SK-N-SH (cell line): ENCODE measurements at regions of chr4 and their contacts with region 1.

Region 1: DNA sequence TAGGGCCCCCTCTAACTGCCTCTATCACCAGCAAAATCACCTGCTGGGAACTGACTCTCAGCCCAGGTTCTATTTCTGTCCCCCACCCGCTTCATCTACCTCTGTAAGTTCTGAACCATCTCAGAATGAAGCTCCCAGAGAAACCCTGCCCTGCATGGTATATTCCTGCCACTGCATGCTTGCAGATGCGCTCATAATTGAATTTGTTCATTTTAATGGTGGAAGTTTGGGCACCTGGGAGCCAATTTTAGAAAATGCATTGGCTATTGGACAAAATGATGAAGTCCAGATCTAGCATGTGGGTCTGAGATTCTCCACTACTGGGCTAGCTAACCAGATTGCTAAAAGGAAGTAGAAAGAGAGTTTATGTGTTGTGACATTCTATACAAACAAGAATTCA is 28.6 kb upstream of the SLC10A4 start:
- DNase-seq: no peak
- H3K4me3 ChIP-seq: no peak overlapping the region
- H3K27ac ChIP-seq: no peak overlapping the region
- H3K4me1 ChIP-seq: peaks cover 0 to 10% of the 10 kb centered on the region in 2 experiments; a peak in 1 of 4 replicates
- H3K27me3 ChIP-seq: no peaks in the 10 kb centered on the region
- CTCF ChIP-seq: no peak
- EP300 ChIP-seq: peak in 1 of 2 experiments; percentile 93; a peak in 2 of 4 replicates
- RAD21 ChIP-seq: peak; percentile 31

Region 2: DNA sequence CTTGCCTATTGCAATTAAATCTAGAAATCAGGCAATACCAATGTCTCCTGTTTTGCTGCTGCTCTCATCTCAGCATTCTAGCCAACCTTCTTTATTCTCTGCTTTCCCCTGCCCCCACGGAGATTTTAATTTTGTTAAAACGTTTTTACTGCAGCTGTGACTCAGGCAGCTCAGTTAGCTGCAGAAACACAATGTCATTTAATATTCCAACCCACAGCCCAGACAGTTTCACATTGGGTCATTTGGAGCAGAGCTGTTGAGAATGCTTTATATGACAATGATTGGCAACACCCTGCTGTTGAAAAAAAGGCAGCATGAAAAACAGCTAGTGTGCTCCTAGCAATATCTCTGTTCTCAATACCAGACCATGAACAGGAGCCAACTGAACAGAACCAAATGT is 16.0 kb after region 1 on chr4:
- CTCF ChIA-PET with region 1: interaction called, 10 read pairs
- POLR2A ChIA-PET with region 1: no interaction called
- DNase-seq: no peak
- H3K4me3 ChIP-seq: no peak overlapping the region
- H3K27ac ChIP-seq: peak overlapping the region in 1 of 2 experiments; percentile 67; a peak in 2 of 4 replicates
- H3K4me1 ChIP-seq: peaks cover 15 to 19% of the 10 kb centered on the region in 2 experiments; a peak in 3 of 4 replicates
- H3K27me3 ChIP-seq: no peaks in the 10 kb centered on the region
- CTCF ChIP-seq: no peak
- EP300 ChIP-seq: 0 out of 4 replicates have a peak, but pooled peaks of 1 of the 2 experiments have one; percentile 3
- RAD21 ChIP-seq: no peak